Posterior vena cava (tissue), 2 donors: ENCODE measurements at regions of chr14 and their contacts with region 1.

Region 1: DNA sequence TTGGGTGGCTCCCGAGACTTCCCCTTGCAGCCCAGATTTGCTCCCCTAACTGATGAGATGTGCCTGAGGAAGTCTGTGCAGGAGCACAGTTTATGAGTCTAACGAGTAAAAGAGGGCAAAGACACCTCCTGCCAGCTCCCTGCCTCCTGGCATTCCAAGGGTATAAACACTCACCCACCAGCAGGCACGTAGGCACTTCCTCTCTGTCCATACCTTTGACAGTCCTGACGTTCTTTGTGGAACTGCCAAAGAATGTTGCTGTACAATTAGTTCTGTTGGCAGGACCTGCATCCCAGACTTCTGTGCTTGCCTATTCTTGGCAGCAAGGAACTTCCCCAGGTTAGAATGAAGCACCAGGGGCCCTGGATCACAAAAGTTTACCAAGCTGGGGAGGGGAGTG is 889.3 kb downstream of the BCL11B start:
- DNase-seq: no peak

Region 2: GRCh38 chr14:96470331-96470730 is 1912.3 kb before region 1 on chr14:
- intact Hi-C with region 1: loop called in 1 of 2 experiments (anchors 5 kb)
- DNase-seq: no peak

Region 3: DNA sequence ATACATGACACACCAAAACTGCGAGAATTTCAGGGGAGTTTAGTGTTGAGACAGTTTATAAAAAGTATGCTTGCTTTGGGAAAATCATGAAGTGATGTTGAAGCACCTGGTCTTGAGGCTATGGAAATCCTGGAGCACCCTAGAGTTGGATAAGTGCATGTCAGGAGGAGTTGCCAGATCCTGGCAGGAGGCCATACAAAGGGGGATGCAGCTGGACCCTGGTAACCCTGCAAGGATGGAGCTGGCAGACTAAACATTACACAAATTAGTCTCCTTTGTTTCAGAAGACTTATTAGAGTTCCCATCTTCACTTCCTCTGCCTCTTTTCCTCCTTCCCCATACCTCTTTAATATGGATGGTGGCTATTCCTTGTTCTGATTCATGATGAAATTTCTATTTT is 17.7 kb before region 1 on chr14:
- intact Hi-C with region 1: loop called in 1 of 2 experiments (anchors 1 kb)
- DNase-seq: no peak